ENCODE measurements at regions of chr20 and their contacts with region 1.

Region 1: DNA sequence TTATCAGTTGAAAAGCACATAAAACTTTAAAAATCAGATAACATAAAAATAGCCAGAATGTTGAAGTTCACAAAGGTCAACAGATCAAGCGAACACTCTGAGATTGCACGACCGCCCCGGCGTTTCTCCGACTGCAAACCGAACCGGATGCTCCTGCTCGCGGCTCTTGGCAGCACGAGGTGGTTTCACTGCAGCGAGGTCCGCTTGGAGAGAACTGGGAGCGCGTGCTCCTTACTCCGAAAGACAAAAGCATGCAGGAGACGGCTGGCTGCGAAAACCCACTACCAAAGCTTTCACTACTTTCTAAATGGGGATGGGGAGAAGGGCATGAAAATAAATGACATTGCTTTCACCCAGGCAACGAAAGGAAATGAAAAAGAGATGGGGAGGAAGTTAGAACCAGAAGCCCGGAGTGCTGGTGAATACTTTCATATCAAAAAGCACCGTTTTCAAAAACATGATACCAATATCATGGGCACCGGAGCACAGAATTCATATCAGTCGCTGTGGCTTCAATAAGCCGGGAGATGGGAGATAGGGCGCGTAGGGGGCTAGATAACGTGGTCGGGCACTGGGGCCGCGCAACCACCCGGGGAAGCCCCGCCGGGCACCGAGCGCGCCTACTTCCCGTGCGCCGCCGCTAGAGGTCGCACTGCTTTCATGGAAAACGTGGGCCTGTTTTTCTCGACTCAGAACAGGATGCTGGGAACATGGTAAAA is 8.3 kb upstream of the ANKRD60 start:
- DNase-seq: peak; percentile 73 to 81 (median 77)
- H3K4me3 ChIP-seq: peak overlapping the region; percentile 26 to 70
- H3K4me3 Mint-ChIP-seq: peak overlapping the region; percentile 86 to 93 (median 92)
- H3K27ac ChIP-seq: peak overlapping the region; percentile 62
- H3K27ac Mint-ChIP-seq: peak overlapping the region; percentile 83 to 97 (median 92)
- H3K4me1 ChIP-seq: peaks cover 5% of the 10 kb centered on the region
- H3K4me1 Mint-ChIP-seq: peaks cover 3 to 18% (median 11%) of the 10 kb centered on the region in 4 donors
- H3K27me3 ChIP-seq: no peaks in the 10 kb centered on the region
- H3K27me3 Mint-ChIP-seq: no peaks in the 10 kb centered on the region

Region 2: DNA sequence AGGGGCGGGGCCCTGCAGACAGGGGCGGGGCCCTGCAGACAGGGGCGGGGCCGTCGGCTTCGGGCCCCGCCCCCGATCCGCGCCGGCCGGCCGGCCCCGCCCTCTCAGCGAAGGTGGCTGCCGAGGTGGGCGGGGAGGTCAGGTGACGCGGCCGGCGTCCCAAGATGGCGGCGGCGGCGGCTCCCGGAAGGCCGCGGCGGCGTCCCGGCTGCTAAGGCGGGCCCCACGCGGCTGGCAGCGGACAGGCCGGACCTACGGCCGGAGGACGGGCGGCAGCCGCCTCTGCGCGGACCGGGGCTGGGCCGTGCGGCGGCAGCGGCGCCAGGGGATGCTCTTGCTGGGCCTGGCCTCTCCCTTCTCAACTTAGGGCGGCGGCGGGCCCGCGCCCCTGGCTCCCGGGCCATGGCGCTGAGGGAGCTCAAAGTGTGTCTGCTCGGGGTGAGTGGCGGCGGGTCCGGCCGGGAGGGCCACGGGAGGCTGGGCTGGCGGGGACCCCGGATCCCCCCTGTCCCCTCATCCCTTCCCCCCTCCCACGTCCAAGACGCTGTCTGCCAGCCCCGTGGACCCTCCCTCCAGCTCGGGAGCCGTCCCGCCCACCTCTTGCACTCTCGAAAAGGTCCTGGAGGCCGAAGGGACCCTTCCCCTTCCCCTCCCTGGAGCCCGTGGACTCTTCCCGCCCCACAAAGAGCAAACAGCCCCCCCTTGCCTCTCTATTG is 73.0 kb after region 1 on chr20 and contains the start of gene RAB22A:
- CTCF ChIA-PET with region 1: interaction called, 3 read pairs
- POLR2A ChIA-PET with region 1: interaction called, 6 read pairs
- intact Hi-C with region 1: loop called (anchors 2 kb)
- DNase-seq: peak; percentile 77 to 88 (median 83)
- H3K4me3 ChIP-seq: peak within 1 kb of the TSS; percentile 62 to 72
- H3K4me3 Mint-ChIP-seq: peak within 1 kb of the TSS; percentile 88 to 98 (median 94)
- H3K27ac ChIP-seq: peak within 1 kb of the TSS; percentile 87
- H3K27ac Mint-ChIP-seq: peak within 1 kb of the TSS; percentile 95 to 99 (median 99)
- H3K4me1 ChIP-seq: peaks cover 68% of the 10 kb centered on the region
- H3K4me1 Mint-ChIP-seq: peaks cover 40 to 71% (median 56%) of the 10 kb centered on the region in 4 donors
- H3K27me3 ChIP-seq: no peaks in the 10 kb centered on the region
- H3K27me3 Mint-ChIP-seq: no peaks in the 10 kb centered on the region
- total RNA-seq, gene RAB22A: 23.6 TPM

Region 3: DNA sequence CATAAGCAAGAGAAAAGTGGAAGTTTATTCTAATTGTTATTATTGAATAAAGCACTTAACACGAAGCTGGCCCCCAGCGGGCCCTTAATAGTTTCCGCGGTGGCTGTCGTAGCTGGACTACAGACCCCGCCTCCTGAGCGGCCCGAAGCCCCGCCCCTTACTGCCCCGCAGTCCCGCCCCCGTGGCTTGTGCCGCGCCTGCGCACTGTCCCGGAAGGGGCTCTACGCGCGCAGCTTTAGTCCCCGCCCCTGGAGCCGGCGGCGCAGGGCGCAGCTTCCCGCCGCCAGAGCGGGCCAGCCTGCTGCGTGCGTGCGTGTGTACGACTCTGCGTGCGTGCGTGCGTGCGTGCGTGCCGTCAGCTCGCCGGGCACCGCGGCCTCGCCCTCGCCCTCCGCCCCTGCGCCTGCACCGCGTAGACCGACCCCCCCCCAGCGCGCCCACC is 152.1 kb after region 1 on chr20 and contains the start of gene VAPB:
- CTCF ChIA-PET with region 1: interaction called, 6 read pairs
- POLR2A ChIA-PET with region 1: no interaction called
- intact Hi-C with region 1: loop called (anchors 2 kb)
- DNase-seq: peak; percentile 94 to 98 (median 97)
- H3K4me3 ChIP-seq: peak within 1 kb of the TSS; percentile 47 to 58
- H3K4me3 Mint-ChIP-seq: peak within 1 kb of the TSS; percentile 94 to 97 (median 94)
- H3K27ac ChIP-seq: peak within 1 kb of the TSS; percentile 98
- H3K27ac Mint-ChIP-seq: peak within 1 kb of the TSS; percentile 78 to 99 (median 99)
- H3K4me1 ChIP-seq: peaks cover 46% of the 10 kb centered on the region
- H3K4me1 Mint-ChIP-seq: peaks cover 29 to 43% (median 38%) of the 10 kb centered on the region in 4 donors
- H3K27me3 ChIP-seq: no peaks in the 10 kb centered on the region
- H3K27me3 Mint-ChIP-seq: peaks cover 0 to 3% of the 10 kb centered on the region in 2 donors
- total RNA-seq, gene VAPB: 37.6 to 40.1 TPM

Region 4: DNA sequence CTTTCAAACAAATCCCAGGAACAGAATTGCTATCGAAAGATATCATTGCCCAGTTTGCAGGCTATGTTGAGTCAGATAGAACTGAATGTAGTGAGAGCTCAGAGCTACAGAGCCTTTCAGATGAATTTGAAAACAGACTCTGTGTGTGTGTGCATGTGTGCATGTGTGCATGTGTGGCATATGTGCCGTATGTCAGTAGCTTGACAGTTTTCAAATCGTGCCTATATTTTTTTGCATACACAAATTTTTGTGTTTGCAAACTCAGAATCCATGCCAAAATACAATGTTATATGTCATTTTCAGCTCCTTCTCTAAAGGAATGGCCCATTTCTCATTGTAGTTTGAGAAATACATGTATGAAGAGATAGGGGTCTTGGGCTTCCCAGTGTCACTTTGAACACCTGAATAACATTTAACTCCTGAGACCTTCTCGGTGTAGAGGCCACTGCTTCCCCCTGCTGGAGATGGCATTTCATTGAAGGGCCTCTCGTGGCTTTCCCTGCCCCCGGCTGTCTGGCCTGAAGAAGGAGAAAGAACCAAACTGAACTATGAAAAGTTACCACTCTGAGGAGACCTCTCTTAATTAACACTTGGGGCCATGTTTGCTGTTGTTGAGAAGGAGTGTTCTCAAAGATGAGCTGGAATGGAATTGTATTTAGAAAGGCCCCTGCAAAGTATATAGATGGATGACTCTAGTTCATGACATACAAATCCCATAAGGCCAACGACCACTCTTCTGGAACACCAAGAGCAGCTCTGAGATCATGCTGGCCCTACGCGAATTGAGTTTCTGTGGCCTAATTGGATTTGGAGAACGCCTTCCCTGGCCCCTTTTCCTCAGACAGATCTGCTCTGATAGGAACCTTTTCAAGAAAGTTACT is 211.0 kb after region 1 on chr20:
- CTCF ChIA-PET with region 1: interaction called, 15 read pairs
- POLR2A ChIA-PET with region 1: no interaction called
- intact Hi-C with region 1: loop called (anchors 1 kb)
- DNase-seq: peak; percentile 31 to 60 (median 40)
- H3K4me3 ChIP-seq: no peak overlapping the region
- H3K4me3 Mint-ChIP-seq: no peak overlapping the region
- H3K27ac ChIP-seq: no peak overlapping the region
- H3K27ac Mint-ChIP-seq: peak overlapping the region in 3 of 7 donors; percentile 11 to 49 (median 24)
- H3K4me1 ChIP-seq: no peaks in the 10 kb centered on the region
- H3K4me1 Mint-ChIP-seq: peaks cover 0 to 8% (median 2%) of the 10 kb centered on the region in 4 donors
- H3K27me3 ChIP-seq: no peaks in the 10 kb centered on the region
- H3K27me3 Mint-ChIP-seq: no peaks in the 10 kb centered on the region

Region 5: GRCh38 chr20:58618351-58619076 is 381.7 kb after region 1 on chr20:
- CTCF ChIA-PET with region 1: no interaction called
- POLR2A ChIA-PET with region 1: no interaction called
- intact Hi-C with region 1: no loop called
- DNase-seq: no peak
- H3K4me3 ChIP-seq: no peak overlapping the region
- H3K4me3 Mint-ChIP-seq: no peak overlapping the region
- H3K27ac ChIP-seq: no peak overlapping the region
- H3K27ac Mint-ChIP-seq: no peak overlapping the region
- H3K4me1 ChIP-seq: no peaks in the 10 kb centered on the region
- H3K4me1 Mint-ChIP-seq: no peaks in the 10 kb centered on the region
- H3K27me3 ChIP-seq: no peaks in the 10 kb centered on the region
- H3K27me3 Mint-ChIP-seq: peaks cover 15 to 27% of the 10 kb centered on the region in 2 donors

Region 6: DNA sequence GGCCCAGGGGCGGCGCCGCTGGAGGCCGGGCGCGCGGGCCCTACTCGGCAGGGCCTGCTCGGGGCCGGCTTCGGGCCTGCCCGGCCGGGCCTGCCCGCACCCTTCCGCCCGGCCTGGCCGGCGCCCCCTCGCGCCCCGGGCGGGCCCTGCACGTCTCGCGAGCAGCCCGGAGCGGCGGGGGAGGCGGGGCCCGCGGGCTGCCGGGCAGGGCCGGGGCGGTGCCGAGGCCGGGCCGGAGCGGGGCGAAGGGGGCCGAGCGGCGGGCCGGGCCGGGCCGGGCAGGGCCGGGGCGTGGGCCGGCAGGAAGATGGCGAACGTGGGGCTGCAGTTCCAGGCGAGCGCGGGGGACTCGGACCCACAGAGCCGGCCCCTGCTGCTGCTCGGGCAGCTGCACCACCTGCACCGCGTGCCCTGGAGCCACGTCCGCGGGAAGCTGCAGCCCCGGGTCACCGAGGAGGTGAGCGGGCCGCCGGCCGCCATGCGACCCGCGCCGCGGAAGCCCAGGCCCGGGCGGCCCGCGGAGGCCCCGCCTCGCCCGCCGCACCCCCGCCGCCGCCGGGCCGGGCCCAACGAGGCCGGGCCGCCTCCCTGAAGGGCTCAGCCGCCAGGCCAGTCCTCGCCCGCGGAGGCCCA is 455.9 kb after region 1 on chr20 and contains the start of gene NPEPL1:
- CTCF ChIA-PET with region 1: no interaction called
- POLR2A ChIA-PET with region 1: interaction called, 3 read pairs
- intact Hi-C with region 1: loop called (anchors 1 kb)
- DNase-seq: peak in 4 of 5 donors; percentile 60 to 75 (median 66)
- H3K4me3 ChIP-seq: peak within 1 kb of the TSS in 1 of 2 donors; percentile 36
- H3K4me3 Mint-ChIP-seq: peak within 1 kb of the TSS; percentile 77 to 85 (median 81)
- H3K27ac ChIP-seq: peak within 1 kb of the TSS; percentile 52
- H3K27ac Mint-ChIP-seq: peak within 1 kb of the TSS; percentile 79 to 90 (median 85)
- H3K4me1 ChIP-seq: peaks cover 16% of the 10 kb centered on the region
- H3K4me1 Mint-ChIP-seq: peaks cover 6 to 17% (median 13%) of the 10 kb centered on the region in 4 donors
- H3K27me3 ChIP-seq: no peaks in the 10 kb centered on the region
- H3K27me3 Mint-ChIP-seq: no peaks in the 10 kb centered on the region
- total RNA-seq, gene NPEPL1: 44.2 to 44.8 TPM

Region 7: DNA sequence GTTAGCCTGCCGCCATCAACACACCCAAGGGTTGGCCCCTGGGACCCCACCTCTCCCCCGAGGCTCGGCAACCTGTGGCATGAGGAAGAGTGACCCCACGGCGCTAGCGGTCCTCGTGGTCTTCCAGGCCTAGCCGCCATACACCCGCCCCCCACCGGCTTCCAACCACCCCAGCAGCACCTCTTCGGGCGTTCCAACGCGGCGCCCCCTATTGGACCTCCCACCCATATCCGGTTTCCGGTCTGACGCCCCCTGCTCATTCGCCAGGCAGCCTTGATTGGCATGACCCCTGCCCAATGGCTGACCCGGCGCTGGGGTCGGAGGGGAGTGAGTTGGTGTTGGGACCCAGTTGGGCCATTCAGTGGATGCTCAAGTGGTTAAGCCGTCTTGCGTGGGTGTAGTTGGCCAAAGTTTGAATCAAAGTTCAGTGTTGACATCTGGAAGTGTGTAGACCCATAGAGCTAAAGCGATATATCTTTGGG is 614.0 kb after region 1 on chr20 and contains the start of gene GNAS-AS1:
- CTCF ChIA-PET with region 1: no interaction called
- POLR2A ChIA-PET with region 1: no interaction called
- intact Hi-C with region 1: loop called (anchors 5 kb)
- DNase-seq: peak; percentile 62 to 73 (median 73)
- H3K4me3 ChIP-seq: peak within 1 kb of the TSS in 1 of 2 donors; percentile 46
- H3K4me3 Mint-ChIP-seq: peak within 1 kb of the TSS; percentile 86 to 95 (median 90)
- H3K27ac ChIP-seq: no peak within 1 kb of the TSS
- H3K27ac Mint-ChIP-seq: peak within 1 kb of the TSS in 2 of 7 donors; percentile 46 to 75
- H3K4me1 ChIP-seq: peaks cover 13% of the 10 kb centered on the region
- H3K4me1 Mint-ChIP-seq: peaks cover 4 to 19% (median 13%) of the 10 kb centered on the region in 4 donors
- H3K27me3 ChIP-seq: peaks cover 16% of the 10 kb centered on the region
- H3K27me3 Mint-ChIP-seq: peaks cover 29 to 32% of the 10 kb centered on the region in 2 donors
- total RNA-seq, gene GNAS-AS1: 0.94 to 1.1 TPM